ENCODE measurements at regions of chr12 and their contacts with region 1.

Region 1: DNA sequence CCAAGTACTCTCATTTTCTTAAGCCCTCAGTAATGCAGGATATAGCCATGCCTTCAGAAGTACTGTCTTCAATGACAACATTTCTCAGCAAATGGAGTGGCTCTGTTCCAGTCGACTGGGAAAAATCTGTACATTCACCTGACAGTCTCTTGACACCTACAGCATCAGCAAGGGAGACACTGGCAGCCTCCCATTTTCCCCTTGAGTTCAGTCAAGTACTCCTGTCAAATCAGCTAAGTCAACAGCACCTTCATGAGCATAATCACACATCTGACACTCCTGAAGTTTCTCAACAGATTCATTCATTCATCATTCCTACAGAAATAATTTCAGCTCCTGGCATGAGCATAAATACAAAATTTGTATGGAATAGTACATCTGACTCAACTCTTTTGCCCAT is 46.1 kb downstream of the INTS13 start:
- DNase-seq: no peak
- H3K4me3 ChIP-seq: no peak overlapping the region
- H3K27me3 ChIP-seq: no peaks in the 10 kb centered on the region
- CTCF ChIP-seq: no peak

Region 2: GRCh38 chr12:26760657-26761293 is 130.9 kb before region 1 on chr12:
- CTCF ChIA-PET with region 1: no interaction called
- POLR2A ChIA-PET with region 1: no interaction called
- DNase-seq: no peak
- H3K4me3 ChIP-seq: no peak overlapping the region
- H3K27me3 ChIP-seq: no peaks in the 10 kb centered on the region
- CTCF ChIP-seq: no peak

Region 3: GRCh38 chr12:26878661-26879119 is 13.0 kb before region 1 on chr12:
- CTCF ChIA-PET with region 1: interaction called, 11 read pairs
- POLR2A ChIA-PET with region 1: no interaction called
- DNase-seq: no peak
- H3K4me3 ChIP-seq: no peak overlapping the region
- H3K27me3 ChIP-seq: peaks cover 1% of the 10 kb centered on the region; the same call in 1 of the 2 replicates
- CTCF ChIP-seq: no peak